ENCODE measurements at regions of chr11 and their contacts with region 1.

Region 1: GRCh38 chr11:71406681-71407080 is 41.5 kb downstream of the DHCR7 start:
- DNase-seq: no peak

Region 2: GRCh38 chr11:69500285-69501132 is 1906.2 kb before region 1 on chr11:
- intact Hi-C with region 1: loop called in 1 of 2 experiments (anchors 10 kb)
- DNase-seq: peak; percentile 72

Measured in posterior vena cava (tissue), 2 donors.